ENCODE measurements at regions of chr11 and their contacts with region 1.

Region 1: GRCh38 chr11:47152953-47153950 is 23.4 kb downstream of the ARFGAP2 start:
- DNase-seq: peak; percentile 80
- CTCF ChIP-seq: peak; percentile 95

Region 2: GRCh38 chr11:46889689-46890475 is 263.4 kb before region 1 on chr11:
- CTCF ChIA-PET with region 1: interaction called, 104 read pairs
- POLR2A ChIA-PET with region 1: no interaction called
- DNase-seq: peak; percentile 83
- CTCF ChIP-seq: peak; percentile 78

Region 3: GRCh38 chr11:46906609-46907041 is 246.6 kb before region 1 on chr11:
- CTCF ChIA-PET with region 1: interaction called, 52 read pairs
- POLR2A ChIA-PET with region 1: no interaction called
- DNase-seq: no peak
- CTCF ChIP-seq: no peak

Region 4: GRCh38 chr11:46916286-46917108 is 236.8 kb before region 1 on chr11:
- CTCF ChIA-PET with region 1: interaction called, 52 read pairs
- POLR2A ChIA-PET with region 1: no interaction called
- DNase-seq: peak; percentile 60
- CTCF ChIP-seq: no peak

Region 5: GRCh38 chr11:47130543-47130942 is 22.7 kb before region 1 on chr11:
- CTCF ChIA-PET with region 1: interaction called, 43 read pairs
- POLR2A ChIA-PET with region 1: no interaction called
- DNase-seq: no peak
- CTCF ChIP-seq: no peak

Region 6: GRCh38 chr11:47204637-47204989 is 51.4 kb after region 1 on chr11:
- CTCF ChIA-PET with region 1: no interaction called
- POLR2A ChIA-PET with region 1: no interaction called
- DNase-seq: no peak
- CTCF ChIP-seq: no peak